Activated naive CD4-positive, alpha-beta T cell treated with anti-CD3 and anti-CD28 coated beads for 36 hours (primary cell): ENCODE measurements at regions of chr16 and their contacts with region 1.

Region 1: DNA sequence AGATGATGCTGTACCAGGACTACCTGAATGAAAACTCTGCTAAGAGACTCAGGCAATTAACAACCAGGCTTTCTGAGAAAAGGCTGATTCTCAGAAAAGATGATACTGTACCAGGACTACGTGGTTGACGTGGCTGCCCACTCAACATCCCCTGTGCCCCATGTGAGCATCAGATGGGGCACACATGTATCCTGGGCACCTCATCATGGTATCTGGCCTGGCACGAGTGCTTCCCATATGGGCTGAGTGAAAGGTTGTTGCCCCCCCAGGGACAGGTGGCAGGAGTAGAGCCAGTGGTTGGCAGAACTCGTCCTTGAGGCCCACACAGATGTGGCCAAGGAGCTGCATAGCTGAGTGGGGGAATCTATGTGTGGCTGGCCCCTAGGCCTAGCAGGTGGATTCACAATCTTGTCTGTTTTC is 3.5 kb upstream of the CES4A start:
- DNase-seq: peak; percentile 81
- H3K4me3 Mint-ChIP-seq: no peak overlapping the region
- H3K27ac Mint-ChIP-seq: peak overlapping the region; percentile 96
- H3K4me1 Mint-ChIP-seq: peaks cover 30% of the 10 kb centered on the region
- H3K27me3 Mint-ChIP-seq: no peaks in the 10 kb centered on the region

Region 2: DNA sequence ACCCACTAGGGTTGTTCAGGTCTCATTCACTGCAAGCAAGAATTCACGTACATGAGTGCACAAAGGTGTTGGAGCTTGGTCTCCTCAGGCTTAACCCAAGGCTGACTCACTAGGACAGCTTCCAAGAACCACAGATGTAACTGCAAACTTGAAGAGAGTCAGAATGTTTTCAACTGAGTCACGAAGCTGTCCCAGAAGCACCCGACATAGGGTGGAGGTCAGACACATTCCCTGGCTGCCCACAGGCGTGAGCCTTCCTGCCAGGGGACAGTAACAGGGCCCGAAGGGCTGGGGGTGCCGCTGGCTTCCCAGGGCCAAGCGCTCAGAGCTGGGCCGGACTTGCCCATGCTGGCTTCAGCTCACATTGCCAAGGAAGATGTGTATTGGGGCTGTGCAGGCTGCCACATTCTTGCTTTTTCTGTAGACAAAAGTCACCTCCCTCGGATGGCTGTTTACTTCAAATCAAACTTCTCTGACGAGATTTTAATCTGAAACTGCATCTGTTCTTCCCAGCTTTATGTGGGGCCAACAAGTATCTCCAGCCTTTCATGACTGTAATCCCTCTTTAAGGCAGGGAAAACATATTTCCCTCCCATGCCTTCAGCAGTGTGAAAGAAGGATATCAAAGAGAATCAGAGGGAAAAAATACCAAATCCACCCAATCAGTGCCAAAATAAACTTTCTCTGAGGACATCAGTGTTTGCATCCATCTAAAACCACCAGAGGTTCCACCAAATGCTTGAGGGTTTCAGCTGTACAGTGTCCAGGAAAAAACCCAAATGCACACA is 366.1 kb before region 1 on chr16:
- CTCF ChIA-PET with region 1: no interaction called
- intact Hi-C with region 1: no loop called
- DNase-seq: no peak
- H3K4me3 Mint-ChIP-seq: no peak overlapping the region
- H3K27ac Mint-ChIP-seq: no peak overlapping the region
- H3K4me1 Mint-ChIP-seq: peaks cover 2% of the 10 kb centered on the region
- H3K27me3 Mint-ChIP-seq: no peaks in the 10 kb centered on the region

Region 3: GRCh38 chr16:66798161-66798560 is 186.7 kb before region 1 on chr16:
- CTCF ChIA-PET with region 1: no interaction called
- intact Hi-C with region 1: no loop called
- DNase-seq: no peak
- H3K4me3 Mint-ChIP-seq: no peak overlapping the region
- H3K27ac Mint-ChIP-seq: no peak overlapping the region
- H3K4me1 Mint-ChIP-seq: no peaks in the 10 kb centered on the region
- H3K27me3 Mint-ChIP-seq: no peaks in the 10 kb centered on the region

Region 4: DNA sequence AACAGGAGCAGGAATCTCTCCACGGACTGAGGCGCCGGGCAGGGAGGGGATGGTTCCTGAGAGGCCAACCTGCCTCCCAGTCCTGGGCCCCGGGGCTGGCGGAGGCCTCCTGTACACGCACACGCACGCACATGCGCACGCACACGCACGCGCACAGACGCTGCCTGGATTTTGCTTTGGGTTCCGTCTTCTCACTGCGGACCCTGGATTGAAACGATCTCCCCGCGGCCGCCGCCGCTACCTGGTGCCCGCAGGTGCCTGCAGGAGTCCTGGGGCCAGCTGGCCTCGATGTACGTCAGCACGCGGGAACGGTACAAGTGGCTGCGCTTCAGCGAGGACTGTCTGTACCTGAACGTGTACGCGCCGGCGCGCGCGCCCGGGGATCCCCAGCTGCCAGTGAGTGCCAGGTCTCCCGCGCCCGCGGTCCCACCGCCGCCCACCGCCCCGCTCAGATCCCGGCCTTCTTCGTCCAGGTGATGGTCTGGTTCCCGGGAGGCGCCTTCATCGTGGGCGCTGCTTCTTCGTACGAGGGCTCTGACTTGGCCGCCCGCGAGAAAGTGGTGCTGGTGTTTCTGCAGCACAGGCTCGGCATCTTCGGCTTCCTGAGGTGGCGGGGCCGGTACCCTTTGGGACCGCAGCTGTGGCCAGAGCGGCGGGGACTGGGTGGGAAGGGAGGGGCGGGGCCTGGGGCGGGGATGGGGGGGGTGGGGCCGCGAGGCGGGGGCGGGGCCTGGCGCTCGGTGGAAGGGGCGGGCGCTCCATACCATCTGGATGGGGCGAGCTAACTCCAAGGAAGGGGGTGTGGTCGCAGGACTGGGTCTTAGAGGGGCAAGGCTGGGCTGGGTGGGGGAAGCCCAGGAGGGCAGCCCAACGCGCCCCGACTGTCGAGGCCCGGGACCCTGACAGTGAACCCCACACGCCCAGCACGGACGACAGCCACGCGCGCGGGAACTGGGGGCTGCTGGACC is 15.8 kb after region 1 on chr16:
- CTCF ChIA-PET with region 1: interaction called, 4 read pairs
- intact Hi-C with region 1: loop called (anchors 2 kb)
- DNase-seq: peak; percentile 72
- H3K4me3 Mint-ChIP-seq: peak overlapping the region; percentile 77
- H3K27ac Mint-ChIP-seq: peak overlapping the region; percentile 68
- H3K4me1 Mint-ChIP-seq: peaks cover 15% of the 10 kb centered on the region
- H3K27me3 Mint-ChIP-seq: no peaks in the 10 kb centered on the region

Region 5: DNA sequence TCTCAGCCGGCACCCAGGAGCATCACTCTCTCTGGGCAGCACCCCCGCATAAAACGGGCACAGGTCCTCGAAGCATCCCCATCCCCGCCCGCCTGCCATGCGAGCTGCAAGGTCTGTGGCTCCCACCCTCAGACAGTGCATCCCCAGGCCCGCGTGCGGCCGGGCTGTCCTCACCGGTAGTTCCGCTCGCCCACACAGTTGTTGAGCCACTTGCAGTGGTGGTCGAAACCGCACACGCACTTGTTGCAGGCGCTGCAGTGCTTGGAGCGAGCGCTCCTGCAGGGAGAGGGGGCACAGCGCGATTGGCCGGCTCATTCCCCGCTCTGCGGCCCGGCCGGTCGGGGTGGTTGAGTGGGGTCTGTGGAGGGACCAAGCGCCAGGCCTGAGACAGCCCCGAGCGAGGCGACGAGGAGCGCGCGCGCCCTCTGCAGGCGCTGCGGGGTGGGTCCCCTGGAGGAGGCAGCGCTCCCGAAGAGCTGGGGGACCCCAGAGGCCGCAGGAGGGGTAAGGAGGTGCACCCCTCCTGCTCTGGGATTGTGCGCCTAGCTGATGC is 414.4 kb after region 1 on chr16:
- CTCF ChIA-PET with region 1: no interaction called
- intact Hi-C with region 1: no loop called
- DNase-seq: peak; percentile 59
- H3K4me3 Mint-ChIP-seq: no peak overlapping the region
- H3K27ac Mint-ChIP-seq: no peak overlapping the region
- H3K4me1 Mint-ChIP-seq: peaks cover 4% of the 10 kb centered on the region
- H3K27me3 Mint-ChIP-seq: peaks cover 14% of the 10 kb centered on the region